ENCODE measurements at regions of chr15 and their contacts with region 1.

Region 1: DNA sequence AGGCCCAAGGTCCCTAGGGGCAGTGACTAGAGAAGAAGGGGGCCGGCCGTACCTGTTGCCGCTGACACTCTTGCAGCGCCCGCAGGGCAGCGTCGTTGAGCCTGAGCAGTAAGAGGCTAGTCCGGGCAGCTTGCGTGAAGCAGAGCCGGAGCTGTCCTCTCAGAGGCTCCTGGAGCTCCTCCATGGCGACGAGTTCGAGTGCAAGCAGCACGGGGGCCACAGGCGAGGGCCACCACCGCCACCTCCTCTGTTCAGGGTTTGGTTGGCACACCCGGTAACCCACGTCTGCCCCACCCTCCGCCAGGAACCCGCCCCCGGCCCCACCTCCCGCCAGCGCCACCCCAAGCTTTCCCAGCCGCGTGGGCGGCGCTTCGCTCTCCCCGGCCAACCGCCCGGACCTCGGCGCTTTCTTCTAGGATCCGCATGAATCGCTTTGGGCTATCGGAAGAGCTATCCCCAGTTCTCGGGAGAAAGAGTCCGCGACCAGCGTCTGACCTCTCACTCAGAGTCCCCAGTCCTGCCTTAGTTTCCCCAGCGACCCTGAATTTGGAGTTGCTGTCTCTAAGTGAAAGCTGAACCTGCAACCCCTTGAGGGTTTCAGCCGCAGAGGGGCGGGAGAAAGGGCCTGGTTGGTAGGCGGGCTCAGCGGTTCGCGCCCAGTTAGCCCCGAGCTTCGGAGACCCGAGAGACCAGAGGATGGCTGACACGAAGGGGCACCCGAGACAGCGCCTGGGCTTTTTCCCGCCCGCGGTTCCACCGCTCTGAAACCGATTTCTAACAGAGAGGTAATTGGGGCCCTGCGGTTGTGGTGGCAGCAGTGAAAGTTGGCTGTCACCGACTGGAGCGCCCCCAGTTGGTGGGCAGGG is at the start of gene ELL3:
- DNase-seq: peak; percentile 88
- H3K4me3 Mint-ChIP-seq: peak within 1 kb of the TSS; percentile 85
- H3K27ac Mint-ChIP-seq: peak within 1 kb of the TSS; percentile 89
- H3K4me1 Mint-ChIP-seq: peaks cover 13% of the 10 kb centered on the region
- H3K27me3 Mint-ChIP-seq: no peaks in the 10 kb centered on the region
- CTCF ChIP-seq: peak; percentile 89
- total RNA-seq, gene ELL3: 0.61 and 0.86 TPM in 2 replicates

Region 2: DNA sequence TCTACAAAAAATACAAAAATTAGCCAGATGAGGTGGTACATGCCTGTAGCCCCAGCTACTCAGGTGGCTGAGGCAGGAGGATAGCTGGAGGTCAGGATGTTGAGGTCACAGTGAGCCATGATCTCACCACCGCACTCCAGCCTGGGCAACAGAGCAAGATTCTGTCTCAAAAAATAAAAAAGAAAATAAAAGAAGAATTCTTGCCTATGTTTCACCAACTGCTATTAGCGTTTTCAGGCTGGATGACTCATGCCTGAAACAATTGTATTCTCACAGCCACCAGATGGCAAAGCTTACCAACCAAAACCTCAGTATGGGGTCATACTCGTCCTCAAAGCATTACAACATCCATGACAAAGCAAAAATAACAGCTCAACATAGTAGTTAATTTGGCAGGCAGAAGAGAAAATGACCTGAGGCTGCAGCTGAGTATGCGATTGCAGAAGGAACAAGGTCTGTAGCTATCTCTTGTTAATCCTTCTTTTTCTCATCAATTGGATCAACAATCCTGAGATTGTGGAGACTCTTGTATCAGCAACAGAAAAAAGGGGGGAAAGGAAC is 336.1 kb before region 1 on chr15:
- CTCF ChIA-PET with region 1: interaction called, 3 read pairs
- POLR2A ChIA-PET with region 1: interaction called, 11 read pairs
- intact Hi-C with region 1: loop called (anchors 1 kb)
- DNase-seq: peak; percentile 97
- H3K4me3 Mint-ChIP-seq: no peak overlapping the region
- H3K27ac Mint-ChIP-seq: no peak overlapping the region
- H3K4me1 Mint-ChIP-seq: peaks cover 6% of the 10 kb centered on the region
- H3K27me3 Mint-ChIP-seq: no peaks in the 10 kb centered on the region
- CTCF ChIP-seq: peak; percentile 61

Region 3: GRCh38 chr15:43735416-43735815 is 41.5 kb before region 1 on chr15:
- CTCF ChIA-PET with region 1: no interaction called
- POLR2A ChIA-PET with region 1: no interaction called
- intact Hi-C with region 1: no loop called
- DNase-seq: no peak
- H3K4me3 Mint-ChIP-seq: no peak overlapping the region
- H3K27ac Mint-ChIP-seq: no peak overlapping the region
- H3K4me1 Mint-ChIP-seq: no peaks in the 10 kb centered on the region
- H3K27me3 Mint-ChIP-seq: peaks cover 17% of the 10 kb centered on the region
- CTCF ChIP-seq: no peak

Region 4: DNA sequence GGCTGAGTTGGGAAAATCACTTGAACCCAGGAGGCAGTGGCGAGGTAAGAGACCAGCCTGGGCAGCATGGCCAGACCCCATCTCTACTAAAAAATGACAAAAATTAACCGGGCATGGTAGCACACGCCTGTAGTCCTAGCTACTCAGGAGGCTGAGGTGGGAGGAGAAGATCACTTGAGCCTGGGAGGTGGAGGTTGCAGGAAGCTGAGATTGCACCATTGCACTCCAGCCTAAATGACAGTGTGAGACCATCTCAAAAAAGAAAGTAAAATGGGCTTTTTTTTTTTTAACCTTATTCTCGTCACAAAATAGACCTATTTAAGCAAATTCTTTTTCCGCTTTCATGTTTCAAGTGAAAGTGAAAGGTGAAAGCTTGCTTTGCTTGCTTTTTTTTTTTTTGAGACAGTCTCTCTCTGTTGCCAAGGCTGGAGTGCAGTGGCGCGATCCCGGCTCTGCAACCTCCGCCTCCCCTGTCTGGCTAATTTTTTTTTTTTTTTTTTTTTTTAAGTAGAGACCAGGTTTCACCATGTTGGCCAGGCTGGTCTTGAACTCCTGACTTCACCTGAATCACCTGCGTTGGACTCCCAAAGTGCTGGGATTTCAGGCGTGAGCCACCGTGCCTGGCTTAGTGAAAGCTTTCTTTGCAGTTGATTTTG is 27.1 kb before region 1 on chr15:
- CTCF ChIA-PET with region 1: interaction called, 6 read pairs
- POLR2A ChIA-PET with region 1: interaction called, 22 read pairs
- intact Hi-C with region 1: no loop called
- DNase-seq: peak; percentile 4
- H3K4me3 Mint-ChIP-seq: no peak overlapping the region
- H3K27ac Mint-ChIP-seq: no peak overlapping the region
- H3K4me1 Mint-ChIP-seq: peaks cover 14% of the 10 kb centered on the region
- H3K27me3 Mint-ChIP-seq: no peaks in the 10 kb centered on the region
- CTCF ChIP-seq: no peak

Region 5: GRCh38 chr15:43791993-43792760 is 15.2 kb after region 1 on chr15 and contains the start of gene SERF2:
- CTCF ChIA-PET with region 1: interaction called, 40 read pairs
- POLR2A ChIA-PET with region 1: interaction called, 162 read pairs
- intact Hi-C with region 1: no loop called
- DNase-seq: peak; percentile 99
- H3K4me3 Mint-ChIP-seq: peak within 1 kb of the TSS; percentile 95
- H3K27ac Mint-ChIP-seq: peak within 1 kb of the TSS; percentile 94
- H3K4me1 Mint-ChIP-seq: peaks cover 14% of the 10 kb centered on the region
- H3K27me3 Mint-ChIP-seq: no peaks in the 10 kb centered on the region
- CTCF ChIP-seq: no peak
- total RNA-seq, gene SERF2: 697 and 717 TPM in 2 replicates

Region 6: GRCh38 chr15:44296625-44297524 is 519.9 kb after region 1 on chr15:
- CTCF ChIA-PET with region 1: no interaction called
- POLR2A ChIA-PET with region 1: no interaction called
- intact Hi-C with region 1: no loop called
- DNase-seq: peak; percentile 81
- H3K4me3 Mint-ChIP-seq: peak overlapping the region; percentile 32
- H3K27ac Mint-ChIP-seq: peak overlapping the region; percentile 91
- H3K4me1 Mint-ChIP-seq: peaks cover 38% of the 10 kb centered on the region
- H3K27me3 Mint-ChIP-seq: no peaks in the 10 kb centered on the region
- CTCF ChIP-seq: no peak

Measured in MCF 10A (cell line).